Activated T-helper 1 cell treated with anti-CD3 and anti-CD28 coated beads, Interleukin-12 subunit alpha, Interleukin-12 subunit beta, Interleukin-2, Interleukin-4 antibody, amounts not matched to agents 30 ng/mL and 10 ng/mL and 1 ng/mL, durations not matched to agents 14 hours and 24 hours and 36 hours (primary cell): ENCODE measurements at regions of chr5 and their contacts with region 1.

Region 1: DNA sequence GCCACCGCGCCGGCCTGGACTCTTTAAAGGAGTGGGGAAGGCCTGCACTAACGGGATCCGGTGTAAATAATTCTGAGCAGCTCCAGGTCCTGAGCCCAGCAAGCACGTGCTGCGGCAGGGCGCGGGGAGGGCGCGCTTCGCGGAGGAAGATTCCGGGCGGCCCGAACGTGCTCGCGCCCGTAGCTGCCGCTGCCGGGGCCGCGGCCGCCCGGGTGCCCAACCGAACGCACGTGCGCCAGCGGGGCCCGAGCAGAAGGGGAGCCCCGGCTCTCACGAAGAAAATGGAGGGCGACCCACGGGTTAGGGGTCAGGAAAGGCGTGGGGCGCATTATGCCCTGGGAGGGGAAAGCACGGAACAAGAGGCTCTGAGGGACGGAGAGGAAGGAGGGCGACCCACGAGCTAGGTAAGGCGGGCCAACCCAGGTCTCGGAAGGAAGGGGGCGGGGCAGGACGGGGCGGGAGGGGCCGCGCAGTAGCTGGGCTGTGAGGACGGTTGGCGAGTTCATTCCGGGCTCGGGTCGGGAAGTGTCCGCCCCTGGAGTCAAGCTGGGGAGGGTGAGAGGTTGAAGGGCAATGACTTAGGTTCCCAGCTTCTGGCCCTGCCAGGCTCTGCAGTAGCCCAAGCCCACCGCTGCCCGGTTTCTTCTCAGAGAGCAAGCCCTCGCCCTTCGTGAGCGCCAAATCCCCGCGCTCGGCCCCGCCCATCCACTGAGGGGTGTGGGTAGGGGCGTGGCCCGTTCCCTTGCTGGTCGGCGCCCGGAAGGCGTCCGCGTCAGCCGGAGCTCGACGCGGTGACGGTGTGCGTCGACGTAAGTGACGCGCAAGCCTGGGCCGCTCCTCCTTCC is at the start of gene ZNF131:
- DNase-seq: peak; percentile 96
- H3K4me3 Mint-ChIP-seq: peak within 1 kb of the TSS; percentile 95
- H3K27ac Mint-ChIP-seq: peak within 1 kb of the TSS; percentile 98
- H3K4me1 Mint-ChIP-seq: peaks cover 42% of the 10 kb centered on the region
- H3K27me3 Mint-ChIP-seq: peaks cover 2% of the 10 kb centered on the region
- total RNA-seq, gene ZNF131: 38.3 and 40.2 TPM in 2 replicates

Region 2: DNA sequence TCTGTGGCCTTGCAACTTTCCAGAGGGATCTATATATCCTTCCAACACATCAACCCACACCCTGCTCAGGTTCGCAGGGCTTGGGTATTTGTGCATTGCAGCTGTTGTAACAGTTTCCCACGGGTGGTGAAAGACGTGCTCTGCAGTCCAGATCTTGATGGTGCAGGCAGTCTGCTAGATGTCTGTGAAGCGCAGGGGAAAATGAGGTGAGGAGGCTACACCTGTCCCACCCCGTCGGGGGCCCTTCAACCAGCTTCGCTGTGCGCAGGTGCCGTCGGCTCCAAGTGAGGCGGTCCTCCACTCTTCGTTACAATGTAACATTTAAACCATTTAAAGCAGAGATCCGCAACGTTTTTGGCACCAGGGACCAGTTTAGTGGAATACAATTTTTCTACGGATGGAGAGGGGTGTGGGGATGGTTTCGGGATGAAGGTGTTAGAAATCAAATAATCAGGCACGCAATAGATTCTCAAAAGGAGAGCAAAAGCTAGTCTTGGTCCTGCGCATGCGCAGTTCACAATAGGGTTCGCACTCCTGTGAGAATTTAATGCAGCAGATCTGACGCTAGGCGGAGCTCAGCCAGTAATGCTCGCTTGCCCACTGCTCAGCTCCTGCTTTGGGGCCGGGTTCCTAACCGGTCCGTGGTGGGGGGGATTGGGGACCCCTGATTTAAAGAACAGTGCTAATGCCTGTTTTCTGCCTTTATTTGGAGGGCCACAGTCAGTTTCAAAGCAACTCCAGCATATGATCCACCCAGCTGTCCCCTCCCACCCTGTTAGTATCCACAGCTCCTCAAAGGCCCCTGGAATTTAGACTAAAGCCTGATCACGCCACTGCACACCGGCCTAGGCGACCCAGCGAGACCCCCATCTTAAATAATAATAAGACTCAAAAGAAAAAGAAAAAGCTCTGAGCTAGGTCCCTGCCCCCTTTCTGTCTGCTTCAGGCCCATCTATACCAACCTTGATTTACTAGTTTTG is 212.1 kb before region 1 on chr5:
- intact Hi-C with region 1: loop called (anchors 5 kb)
- DNase-seq: peak; percentile 84
- H3K4me3 Mint-ChIP-seq: peak overlapping the region; percentile 81
- H3K27ac Mint-ChIP-seq: peak overlapping the region; percentile 50
- H3K4me1 Mint-ChIP-seq: peaks cover 12% of the 10 kb centered on the region
- H3K27me3 Mint-ChIP-seq: peaks cover 26% of the 10 kb centered on the region

Region 3: GRCh38 chr5:43008369-43009153 is 112.4 kb before region 1 on chr5:
- intact Hi-C with region 1: loop called (anchors 1 kb)
- DNase-seq: peak; percentile 86
- H3K4me3 Mint-ChIP-seq: peak overlapping the region; percentile 90
- H3K27ac Mint-ChIP-seq: peak overlapping the region; percentile 96
- H3K4me1 Mint-ChIP-seq: peaks cover 41% of the 10 kb centered on the region
- H3K27me3 Mint-ChIP-seq: no peaks in the 10 kb centered on the region

Region 4: DNA sequence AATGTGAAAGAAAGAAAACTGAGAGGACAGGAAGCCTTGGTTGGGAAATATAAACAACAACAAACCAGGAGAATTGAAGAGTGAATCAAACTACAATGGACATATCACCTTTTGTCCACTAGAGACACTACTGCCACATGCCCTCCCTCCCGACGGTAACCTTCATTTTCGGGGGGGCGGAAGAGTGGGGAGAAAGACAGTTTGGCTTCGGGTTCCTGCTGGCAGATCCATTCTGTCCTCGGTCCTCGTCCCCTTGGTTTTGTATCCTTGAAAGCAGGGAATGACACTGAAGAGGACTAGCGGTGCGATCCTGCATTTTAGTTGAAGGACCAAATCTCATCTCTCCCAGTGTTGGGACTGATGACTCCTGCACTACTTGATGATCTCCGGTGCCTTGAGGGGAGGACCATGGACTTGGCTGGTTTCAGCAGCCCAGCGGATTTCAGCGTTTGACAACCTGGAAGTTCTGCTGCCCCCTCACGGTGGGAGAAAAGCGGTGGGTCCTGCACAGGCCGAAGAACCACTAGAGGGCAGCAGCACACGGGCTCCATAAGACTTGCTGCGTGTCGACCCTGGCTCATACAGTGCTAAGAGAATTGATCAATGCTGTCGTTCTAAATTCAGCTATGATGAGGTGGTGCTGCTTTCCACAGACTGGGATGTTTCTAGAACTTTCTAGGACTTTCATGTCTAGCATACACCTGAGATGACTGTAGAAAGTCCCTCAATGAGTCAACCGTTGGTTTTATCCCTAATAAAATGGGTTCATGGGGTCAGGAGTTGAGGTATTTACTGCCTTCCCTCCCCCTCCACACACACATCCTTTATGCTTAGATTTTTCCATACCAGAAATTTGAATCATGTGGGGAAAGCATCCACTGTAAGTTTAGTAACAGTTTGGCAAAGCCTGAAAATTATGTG is 15.3 kb before region 1 on chr5:
- intact Hi-C with region 1: loop called (anchors 1 kb)
- DNase-seq: peak; percentile 83
- H3K4me3 Mint-ChIP-seq: peak overlapping the region; percentile 86
- H3K27ac Mint-ChIP-seq: peak overlapping the region; percentile 89
- H3K4me1 Mint-ChIP-seq: peaks cover 41% of the 10 kb centered on the region
- H3K27me3 Mint-ChIP-seq: no peaks in the 10 kb centered on the region

Region 5: DNA sequence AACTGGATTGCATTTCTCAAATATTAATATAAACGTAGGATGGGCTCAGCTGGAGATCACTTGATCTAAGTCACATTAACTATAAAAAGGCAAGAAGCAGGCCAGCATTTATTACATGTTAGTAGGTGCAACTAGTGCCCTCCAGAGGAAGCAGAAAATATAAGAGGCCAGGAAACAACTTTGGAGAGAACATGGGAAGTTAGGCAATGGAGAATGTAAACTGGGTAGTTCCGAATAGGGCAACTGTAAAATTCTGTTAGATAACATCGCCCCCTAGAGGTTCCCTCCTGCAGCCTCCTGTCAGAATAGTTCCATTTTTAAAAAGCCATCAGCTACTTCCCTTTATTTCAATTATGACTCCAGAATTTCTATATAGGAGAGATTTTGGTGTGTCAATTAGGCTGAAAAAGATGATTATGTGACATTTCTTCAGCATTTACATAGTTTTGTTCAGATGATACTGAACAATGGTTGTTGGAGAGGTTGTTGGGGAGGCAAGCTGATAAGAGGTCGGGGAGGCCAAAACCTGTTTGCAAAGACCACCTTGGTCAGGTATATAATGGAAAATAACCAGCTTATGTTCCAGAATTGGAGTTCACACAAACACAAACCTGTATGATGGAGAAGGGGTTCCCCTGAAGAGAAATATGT is 268.9 kb after region 1 on chr5:
- intact Hi-C with region 1: loop called (anchors 1 kb)
- DNase-seq: peak; percentile 22
- H3K4me3 Mint-ChIP-seq: no peak overlapping the region
- H3K27ac Mint-ChIP-seq: no peak overlapping the region
- H3K4me1 Mint-ChIP-seq: peaks cover 19% of the 10 kb centered on the region
- H3K27me3 Mint-ChIP-seq: no peaks in the 10 kb centered on the region

Region 6: DNA sequence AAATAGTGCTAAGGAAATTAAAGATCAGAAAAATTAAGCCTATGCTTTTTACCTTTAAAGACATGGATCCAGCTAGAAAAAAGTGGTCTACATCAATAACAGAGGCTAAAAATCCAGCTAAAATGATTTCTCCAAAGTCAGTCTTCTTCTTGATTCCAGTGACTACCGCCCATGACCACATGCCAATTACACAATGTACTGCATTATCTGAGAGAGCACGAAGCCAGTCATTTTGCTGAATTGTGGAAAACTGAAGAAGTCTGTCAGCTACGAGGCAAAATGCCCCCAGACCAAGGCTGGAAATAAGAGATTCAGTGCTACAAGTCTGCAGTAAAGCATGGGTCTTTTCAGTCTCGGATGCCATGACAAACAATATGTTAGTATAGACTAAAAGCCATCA is 332.7 kb after region 1 on chr5:
- intact Hi-C with region 1: no loop called
- DNase-seq: no peak
- H3K4me3 Mint-ChIP-seq: no peak overlapping the region
- H3K27ac Mint-ChIP-seq: no peak overlapping the region
- H3K4me1 Mint-ChIP-seq: no peaks in the 10 kb centered on the region
- H3K27me3 Mint-ChIP-seq: no peaks in the 10 kb centered on the region

Region 7: GRCh38 chr5:43602461-43603343 is 481.8 kb after region 1 on chr5 and contains the start of gene NNT:
- intact Hi-C with region 1: loop called (anchors 10 kb)
- DNase-seq: peak; percentile 76
- H3K4me3 Mint-ChIP-seq: peak within 1 kb of the TSS; percentile 91
- H3K27ac Mint-ChIP-seq: peak within 1 kb of the TSS; percentile 91
- H3K4me1 Mint-ChIP-seq: peaks cover 34% of the 10 kb centered on the region
- H3K27me3 Mint-ChIP-seq: no peaks in the 10 kb centered on the region
- total RNA-seq, gene NNT: 43.6 and 47.5 TPM in 2 replicates